ENCODE measurements at regions of chrX and their contacts with region 1.

Region 1: DNA sequence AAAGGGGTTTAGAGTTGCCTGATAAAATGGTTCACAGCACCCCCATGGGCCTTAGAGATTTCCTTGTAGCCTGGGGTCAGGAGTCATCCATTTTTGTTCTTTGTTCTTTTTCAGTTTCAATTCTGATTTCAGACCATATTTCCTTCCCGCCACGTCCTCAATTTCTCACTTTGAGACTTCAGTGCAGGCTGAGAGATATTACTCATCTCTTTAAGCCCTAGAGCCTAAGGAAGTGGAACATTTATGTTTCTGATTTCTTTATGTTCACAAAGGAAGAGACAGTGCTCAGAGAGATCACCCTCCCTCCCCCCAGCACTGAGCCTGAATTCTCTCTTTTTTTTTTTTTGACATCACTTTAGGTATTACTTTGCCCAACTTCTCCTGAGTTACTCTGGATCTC is 56.3 kb downstream of the MSN start:
- DNase-seq: peak; percentile 62
- H3K4me3 Mint-ChIP-seq: peak overlapping the region; percentile 39
- H3K27ac Mint-ChIP-seq: peak overlapping the region; percentile 93
- H3K4me1 Mint-ChIP-seq: peaks cover 88% of the 10 kb centered on the region
- H3K27me3 Mint-ChIP-seq: no peaks in the 10 kb centered on the region

Region 2: GRCh38 chrX:65667503-65668376 is 56.0 kb before region 1 on chrX and contains the start of gene MSN:
- CTCF ChIA-PET with region 1: interaction called, 4 read pairs
- POLR2A ChIA-PET with region 1: interaction called, 7 read pairs
- intact Hi-C with region 1: loop called (anchors 1 kb)
- DNase-seq: peak; percentile 86
- H3K4me3 Mint-ChIP-seq: peak within 1 kb of the TSS; percentile 93
- H3K27ac Mint-ChIP-seq: peak within 1 kb of the TSS; percentile 97
- H3K4me1 Mint-ChIP-seq: peaks cover 29% of the 10 kb centered on the region
- H3K27me3 Mint-ChIP-seq: no peaks in the 10 kb centered on the region
- total RNA-seq, gene MSN: 494 to 502 TPM

Region 3: GRCh38 chrX:65706041-65706828 is 17.5 kb before region 1 on chrX:
- CTCF ChIA-PET with region 1: interaction called, 9 read pairs
- POLR2A ChIA-PET with region 1: interaction called, 14 read pairs
- intact Hi-C with region 1: loop called (anchors 1 kb)
- DNase-seq: peak; percentile 80
- H3K4me3 Mint-ChIP-seq: peak overlapping the region; percentile 33
- H3K27ac Mint-ChIP-seq: peak overlapping the region; percentile 96
- H3K4me1 Mint-ChIP-seq: peaks cover 71% of the 10 kb centered on the region
- H3K27me3 Mint-ChIP-seq: no peaks in the 10 kb centered on the region

Region 4: DNA sequence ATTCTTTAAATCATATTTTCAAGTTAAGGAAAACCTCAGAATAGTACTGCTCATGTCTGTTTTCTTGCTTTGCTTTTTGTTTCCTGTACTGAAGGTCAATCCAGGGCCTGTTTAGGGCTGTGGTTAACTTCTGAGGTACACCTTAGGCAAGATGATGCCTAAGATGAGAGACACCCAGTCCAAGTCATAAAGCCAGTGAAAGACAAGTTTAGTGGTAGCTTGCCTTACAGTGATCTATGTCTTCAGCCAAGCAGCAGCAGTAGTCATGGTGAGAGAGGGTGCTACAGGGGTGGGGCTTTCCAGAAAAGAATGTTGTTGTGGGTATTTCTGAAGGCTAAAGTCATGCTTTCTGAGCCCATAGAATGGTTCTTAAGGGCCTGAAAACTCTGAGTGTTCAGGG is 142.4 kb after region 1 on chrX:
- CTCF ChIA-PET with region 1: no interaction called
- POLR2A ChIA-PET with region 1: no interaction called
- intact Hi-C with region 1: loop called (anchors 1 kb)
- DNase-seq: peak; percentile 56
- H3K4me3 Mint-ChIP-seq: no peak overlapping the region
- H3K27ac Mint-ChIP-seq: peak overlapping the region; percentile 51
- H3K4me1 Mint-ChIP-seq: peaks cover 33% of the 10 kb centered on the region
- H3K27me3 Mint-ChIP-seq: no peaks in the 10 kb centered on the region

Measured in activated CD4-positive, alpha-beta memory T cell treated with anti-CD3 and anti-CD28 coated beads for 36 hours (primary cell).